H1 (cell line): ENCODE measurements at regions of chr6 and their contacts with region 1.

Region 1: GRCh38 chr6:111605100-111605751 is 452 bp downstream of the TRAF3IP2 start:
- DNase-seq: peak; percentile 43 to 67
- H3K4me3 ChIP-seq: peak overlapping the region; percentile 66 to 76 (median 74)
- H3K27ac ChIP-seq: peak overlapping the region; percentile 73; the same call in 1 of the 2 replicates
- H3K4me1 ChIP-seq: peaks cover 14 to 28% (median 19%) of the 10 kb centered on the region in 4 experiments
- H3K27me3 ChIP-seq: no peaks in the 10 kb centered on the region; a peak in 1 of 7 replicates
- CTCF ChIP-seq: no peak
- EP300 ChIP-seq: no peak
- POLR2A ChIP-seq: no peak
- RAD21 ChIP-seq: no peak

Region 2: GRCh38 chr6:111591104-111591900 is 13.9 kb before region 1 on chr6:
- CTCF ChIA-PET with region 1: interaction called, 7 read pairs
- POLR2A ChIA-PET with region 1: interaction called, 35 read pairs
- DNase-seq: no peak
- H3K4me3 ChIP-seq: no peak overlapping the region
- H3K27ac ChIP-seq: no peak overlapping the region
- H3K4me1 ChIP-seq: peaks cover 0 to 8% (median 2%) of the 10 kb centered on the region in 4 experiments; a peak in 2 of 7 replicates
- H3K27me3 ChIP-seq: no peaks in the 10 kb centered on the region
- CTCF ChIP-seq: no peak
- EP300 ChIP-seq: no peak
- POLR2A ChIP-seq: no peak
- RAD21 ChIP-seq: no peak

Region 3: DNA sequence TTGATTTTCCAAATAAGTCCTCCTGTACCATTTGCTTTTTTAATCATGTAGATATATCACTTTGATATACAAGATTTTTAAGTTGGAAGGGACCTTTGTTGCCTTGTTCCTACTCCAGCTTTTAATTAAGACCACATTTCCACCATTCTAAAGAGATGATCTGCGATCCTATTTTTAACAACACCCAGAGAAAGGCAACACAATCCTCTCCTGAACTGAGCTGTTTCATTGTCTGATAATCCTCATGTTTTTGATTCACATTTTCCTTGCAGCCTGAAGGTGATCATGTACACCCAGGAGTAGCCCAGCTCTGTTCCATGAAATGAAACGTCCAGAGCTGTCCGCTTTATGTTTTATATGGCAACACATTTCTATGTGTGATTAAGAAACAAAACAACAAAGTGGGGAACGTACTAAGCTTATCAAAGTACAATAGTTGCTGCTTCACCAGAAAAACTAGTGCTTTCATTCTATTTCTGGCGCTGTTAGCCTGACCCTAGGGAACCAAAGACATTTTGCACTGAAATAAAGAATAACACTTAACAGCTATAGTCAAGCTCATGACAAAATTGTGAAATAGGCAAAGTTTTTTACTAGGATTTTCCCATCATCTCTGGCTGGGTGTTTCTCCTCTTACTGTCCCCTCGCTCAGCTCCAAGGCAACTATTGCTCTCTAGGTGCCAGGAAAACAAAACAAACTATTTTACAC is 23.1 kb after region 1 on chr6:
- CTCF ChIA-PET with region 1: interaction called, 14 read pairs
- POLR2A ChIA-PET with region 1: interaction called, 5 read pairs
- DNase-seq: no peak
- H3K4me3 ChIP-seq: no peak overlapping the region
- H3K27ac ChIP-seq: no peak overlapping the region
- H3K4me1 ChIP-seq: peaks cover 7 to 17% (median 13%) of the 10 kb centered on the region in 4 experiments; a peak in 5 of 7 replicates
- H3K27me3 ChIP-seq: no peaks in the 10 kb centered on the region
- CTCF ChIP-seq: no peak
- EP300 ChIP-seq: no peak
- POLR2A ChIP-seq: no peak
- RAD21 ChIP-seq: no peak

Region 4: DNA sequence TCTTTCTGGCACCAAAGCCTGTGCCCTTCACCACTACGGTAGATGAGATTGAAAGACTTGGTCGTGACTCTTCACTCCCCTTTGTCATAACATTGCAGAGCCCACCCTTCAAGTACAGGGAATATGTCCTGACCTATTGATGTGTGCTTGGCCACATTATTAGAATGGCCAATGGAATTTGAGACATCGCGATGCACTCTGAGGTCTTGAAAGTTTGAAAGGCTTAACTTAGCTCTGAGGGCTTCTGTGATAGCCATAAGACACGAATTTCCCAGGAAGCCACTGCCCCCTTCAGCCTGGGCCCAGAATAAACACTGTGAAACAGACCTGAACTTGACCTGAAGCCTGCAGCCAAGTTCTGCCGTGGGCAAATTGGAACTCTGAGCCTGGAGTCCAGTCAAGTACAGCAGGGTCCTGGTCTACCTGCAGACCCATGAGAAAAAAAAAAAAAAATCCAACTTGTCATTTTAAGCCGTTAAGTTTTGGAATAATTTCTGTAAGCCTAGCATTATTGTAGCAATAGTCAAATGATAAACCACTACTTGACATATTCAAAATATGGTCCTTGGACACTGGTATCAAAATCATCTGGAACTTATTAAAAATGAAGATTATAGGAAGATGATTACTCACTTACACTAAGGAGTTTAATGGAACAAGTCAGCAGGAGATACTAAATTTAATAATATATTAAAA is 37.4 kb after region 1 on chr6:
- CTCF ChIA-PET with region 1: interaction called, 10 read pairs
- POLR2A ChIA-PET with region 1: no interaction called
- DNase-seq: peak; percentile 59 to 69
- H3K4me3 ChIP-seq: no peak overlapping the region
- H3K27ac ChIP-seq: no peak overlapping the region
- H3K4me1 ChIP-seq: peaks cover 0 to 2% (median 0%) of the 10 kb centered on the region in 4 experiments; a peak in 1 of 7 replicates
- H3K27me3 ChIP-seq: no peaks in the 10 kb centered on the region
- CTCF ChIP-seq: peak; percentile 65 to 84 (median 74)
- EP300 ChIP-seq: no peak
- POLR2A ChIP-seq: no peak
- RAD21 ChIP-seq: peak; percentile 91

Region 5: GRCh38 chr6:111750753-111751684 is 145.8 kb after region 1 on chr6:
- CTCF ChIA-PET with region 1: no interaction called
- POLR2A ChIA-PET with region 1: no interaction called
- DNase-seq: peak; percentile 35 to 41
- H3K4me3 ChIP-seq: peak overlapping the region in 1 of 4 experiments; percentile 13; a peak in 1 of 8 replicates
- H3K27ac ChIP-seq: peak overlapping the region; percentile 59
- H3K4me1 ChIP-seq: peaks cover 4 to 15% (median 12%) of the 10 kb centered on the region in 4 experiments; a peak in 5 of 7 replicates
- H3K27me3 ChIP-seq: no peaks in the 10 kb centered on the region
- CTCF ChIP-seq: no peak
- EP300 ChIP-seq: peak in 1 of 2 experiments; percentile 40; a peak in 1 of 3 replicates
- POLR2A ChIP-seq: peak in 1 of 2 experiments; percentile 23; a peak in 1 of 3 replicates
- RAD21 ChIP-seq: 0 out of 4 replicates have a peak, but pooled peaks of 1 of the 2 experiments have one; percentile 1